ENCODE measurements at regions of chr11 and their contacts with region 1.

Region 1: GRCh38 chr11:47620836-47621378 is 21.5 kb downstream of the MTCH2 start:
- DNase-seq: no peak

Region 2: GRCh38 chr11:47578524-47579460 is 42.1 kb before region 1 on chr11 and contains the starts of genes KBTBD4 and NDUFS3:
- intact Hi-C with region 1: loop called in 1 of 2 experiments (anchors 1 kb)
- DNase-seq: peak; percentile 96
- total RNA-seq, gene KBTBD4: 9.5 to 12.3 TPM
- total RNA-seq, gene NDUFS3: 65.6 to 70.3 TPM

Measured in posterior vena cava (tissue), 2 donors.